PC-3 (cell line): ENCODE measurements at regions of chr1 and their contacts with region 1.

Region 1: DNA sequence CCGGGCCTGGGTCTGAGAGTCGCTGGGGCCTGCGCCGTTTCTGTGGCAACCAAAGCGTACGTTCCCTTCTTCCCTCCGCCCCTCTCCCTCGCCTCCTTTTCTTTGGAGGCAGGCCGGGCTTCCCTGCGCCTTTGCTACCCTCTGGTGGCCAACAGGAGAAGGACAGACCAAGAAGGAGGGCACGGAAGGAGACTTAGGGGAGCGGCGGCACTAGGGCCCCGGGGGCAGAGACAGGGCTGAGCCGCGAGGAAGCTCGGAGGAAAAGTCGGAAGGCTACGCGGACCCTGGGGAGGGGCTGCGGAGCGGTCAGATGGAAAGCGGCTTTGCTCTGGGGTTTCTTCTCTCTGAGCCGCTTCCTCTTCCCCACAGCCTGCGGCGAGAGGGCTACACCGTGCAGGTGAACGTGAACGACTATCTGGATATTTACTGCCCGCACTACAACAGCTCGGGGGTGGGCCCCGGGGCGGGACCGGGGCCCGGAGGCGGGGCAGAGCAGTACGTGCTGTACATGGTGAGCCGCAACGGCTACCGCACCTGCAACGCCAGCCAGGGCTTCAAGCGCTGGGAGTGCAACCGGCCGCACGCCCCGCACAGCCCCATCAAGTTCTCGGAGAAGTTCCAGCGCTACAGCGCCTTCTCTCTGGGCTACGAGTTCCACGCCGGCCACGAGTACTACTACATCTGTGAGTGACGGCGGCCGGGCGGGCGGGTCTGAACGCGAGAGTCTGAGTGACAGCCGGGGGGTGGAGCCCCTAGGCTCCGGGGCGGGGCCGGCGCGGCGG is 6.3 kb downstream of the EFNA3 start:
- DNase-seq: peak; percentile 97
- ATAC-seq: peak; percentile 75
- H3K4me3 ChIP-seq: peak overlapping the region; percentile 73
- H3K27ac ChIP-seq: peak overlapping the region; percentile 83
- H3K4me1 ChIP-seq: peaks cover 60% of the 10 kb centered on the region
- H3K27me3 ChIP-seq: peaks cover 33% of the 10 kb centered on the region
- CTCF ChIP-seq: peak; percentile 92

Region 2: GRCh38 chr1:154669464-154670282 is 415.2 kb before region 1 on chr1:
- CTCF ChIA-PET with region 1: no interaction called
- POLR2A ChIA-PET with region 1: no interaction called
- intact Hi-C with region 1: loop called (anchors 1 kb)
- DNase-seq: peak; percentile 91
- ATAC-seq: peak; percentile 100
- H3K4me3 ChIP-seq: no peak overlapping the region
- H3K27ac ChIP-seq: no peak overlapping the region
- H3K4me1 ChIP-seq: no peaks in the 10 kb centered on the region
- H3K27me3 ChIP-seq: peaks cover 6% of the 10 kb centered on the region; the same call in 1 of the 2 replicates
- CTCF ChIP-seq: peak; percentile 97

Region 3: DNA sequence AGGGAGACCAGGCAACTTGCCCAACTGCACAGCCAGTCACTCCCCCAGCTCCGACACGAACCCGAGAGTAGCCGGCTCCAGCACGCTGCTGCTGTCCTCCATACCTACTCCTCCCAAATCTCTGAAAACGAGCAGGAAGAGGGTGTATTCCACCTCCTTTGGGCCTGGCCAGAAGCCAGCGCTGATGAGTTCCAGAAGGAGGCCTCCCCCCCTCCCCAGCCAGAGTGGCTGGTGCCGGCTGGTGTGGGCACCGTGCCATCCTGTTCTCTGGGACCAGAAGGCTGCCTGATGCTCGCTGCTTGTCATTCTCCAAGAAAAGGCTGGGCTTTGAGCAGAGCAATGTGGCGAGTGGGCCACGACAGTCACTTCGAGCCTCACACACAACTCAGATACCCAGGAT is 237.0 kb before region 1 on chr1:
- CTCF ChIA-PET with region 1: no interaction called
- POLR2A ChIA-PET with region 1: no interaction called
- intact Hi-C with region 1: no loop called
- DNase-seq: no peak
- ATAC-seq: no peak
- H3K4me3 ChIP-seq: no peak overlapping the region
- H3K27ac ChIP-seq: no peak overlapping the region
- H3K4me1 ChIP-seq: no peaks in the 10 kb centered on the region
- H3K27me3 ChIP-seq: peaks cover 17% of the 10 kb centered on the region; the same call in 1 of the 2 replicates
- CTCF ChIP-seq: no peak

Region 4: GRCh38 chr1:155001675-155002463 is 83.0 kb before region 1 on chr1:
- CTCF ChIA-PET with region 1: interaction called, 4 read pairs
- POLR2A ChIA-PET with region 1: no interaction called
- intact Hi-C with region 1: loop called (anchors 2 kb)
- DNase-seq: peak; percentile 99
- ATAC-seq: peak; percentile 54
- H3K4me3 ChIP-seq: peak overlapping the region; percentile 83
- H3K27ac ChIP-seq: peak overlapping the region; percentile 77
- H3K4me1 ChIP-seq: peaks cover 49% of the 10 kb centered on the region
- H3K27me3 ChIP-seq: no peaks in the 10 kb centered on the region
- CTCF ChIP-seq: peak; percentile 81

Region 5: DNA sequence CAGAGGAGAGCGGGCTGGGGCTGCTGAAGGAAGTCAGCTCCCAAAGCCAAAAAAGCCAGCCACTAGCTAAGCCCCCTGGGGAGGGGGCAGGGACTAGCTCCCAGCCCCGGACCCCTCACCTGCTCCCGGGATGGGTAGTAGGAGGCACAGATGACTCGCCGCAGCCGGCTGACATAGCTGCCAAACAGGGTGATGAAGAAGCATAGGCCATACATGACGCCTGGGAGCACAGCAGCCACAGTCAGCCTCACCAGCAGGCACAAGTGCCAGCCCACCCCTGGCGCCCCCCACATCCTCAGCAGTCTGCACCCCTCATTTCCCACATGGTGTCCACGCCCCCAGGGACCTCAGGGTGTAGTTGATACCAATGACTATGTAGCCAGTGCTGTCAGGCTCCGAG is 58.7 kb before region 1 on chr1:
- CTCF ChIA-PET with region 1: no interaction called
- POLR2A ChIA-PET with region 1: no interaction called
- intact Hi-C with region 1: no loop called
- DNase-seq: no peak
- ATAC-seq: no peak; the same call in 1 of the 2 replicates
- H3K4me3 ChIP-seq: no peak overlapping the region
- H3K27ac ChIP-seq: no peak overlapping the region
- H3K4me1 ChIP-seq: peaks cover 7% of the 10 kb centered on the region
- H3K27me3 ChIP-seq: no peaks in the 10 kb centered on the region
- CTCF ChIP-seq: no peak

Region 6: DNA sequence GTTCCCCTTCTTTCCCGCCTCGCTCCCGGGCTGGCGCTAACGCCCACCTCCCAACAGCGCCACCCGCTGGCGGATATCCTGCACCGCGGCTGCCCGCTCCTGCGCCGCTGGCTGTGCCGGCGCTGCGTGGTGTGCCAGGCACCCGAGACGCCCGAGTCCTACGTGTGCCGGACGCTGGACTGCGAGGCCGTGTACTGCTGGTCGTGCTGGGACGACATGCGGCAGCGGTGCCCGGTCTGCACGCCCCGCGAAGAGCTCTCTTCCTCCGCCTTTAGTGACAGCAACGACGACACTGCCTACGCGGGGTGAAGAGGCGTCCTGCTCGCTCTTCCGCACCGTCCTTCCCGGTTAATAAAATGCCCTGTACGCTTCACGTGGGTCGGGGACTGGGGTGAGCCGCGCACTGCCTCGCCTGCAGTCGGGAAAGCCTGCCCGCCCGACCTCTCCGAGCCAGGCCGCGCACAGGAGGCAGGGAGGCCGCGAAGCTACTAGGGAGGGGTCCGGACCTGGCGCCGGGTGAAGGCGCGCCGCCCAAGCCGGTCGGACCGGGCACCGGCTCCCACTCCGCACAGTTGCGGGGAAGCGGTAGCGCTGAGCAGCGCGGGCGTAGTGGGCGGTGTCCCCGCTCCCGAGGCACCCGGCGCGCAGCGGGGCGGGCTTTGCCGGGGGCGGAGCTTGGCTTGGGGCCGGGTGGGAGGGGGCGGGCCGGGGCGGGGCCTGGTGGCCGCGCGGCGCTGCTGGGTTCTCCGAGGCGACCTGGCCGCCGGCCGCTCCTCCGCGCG is 34.2 kb before region 1 on chr1 and contains the start of gene ADAM15:
- CTCF ChIA-PET with region 1: interaction called, 41 read pairs
- POLR2A ChIA-PET with region 1: interaction called, 27 read pairs
- intact Hi-C with region 1: loop called (anchors 1 kb)
- DNase-seq: peak; percentile 93
- ATAC-seq: peak; percentile 56
- H3K4me3 ChIP-seq: peak within 1 kb of the TSS; percentile 95
- H3K27ac ChIP-seq: peak within 1 kb of the TSS; percentile 67
- H3K4me1 ChIP-seq: peaks cover 36% of the 10 kb centered on the region
- H3K27me3 ChIP-seq: no peaks in the 10 kb centered on the region
- CTCF ChIP-seq: peak; percentile 97
- total RNA-seq, gene ADAM15: 334 and 384 TPM in 2 replicates

Region 7: DNA sequence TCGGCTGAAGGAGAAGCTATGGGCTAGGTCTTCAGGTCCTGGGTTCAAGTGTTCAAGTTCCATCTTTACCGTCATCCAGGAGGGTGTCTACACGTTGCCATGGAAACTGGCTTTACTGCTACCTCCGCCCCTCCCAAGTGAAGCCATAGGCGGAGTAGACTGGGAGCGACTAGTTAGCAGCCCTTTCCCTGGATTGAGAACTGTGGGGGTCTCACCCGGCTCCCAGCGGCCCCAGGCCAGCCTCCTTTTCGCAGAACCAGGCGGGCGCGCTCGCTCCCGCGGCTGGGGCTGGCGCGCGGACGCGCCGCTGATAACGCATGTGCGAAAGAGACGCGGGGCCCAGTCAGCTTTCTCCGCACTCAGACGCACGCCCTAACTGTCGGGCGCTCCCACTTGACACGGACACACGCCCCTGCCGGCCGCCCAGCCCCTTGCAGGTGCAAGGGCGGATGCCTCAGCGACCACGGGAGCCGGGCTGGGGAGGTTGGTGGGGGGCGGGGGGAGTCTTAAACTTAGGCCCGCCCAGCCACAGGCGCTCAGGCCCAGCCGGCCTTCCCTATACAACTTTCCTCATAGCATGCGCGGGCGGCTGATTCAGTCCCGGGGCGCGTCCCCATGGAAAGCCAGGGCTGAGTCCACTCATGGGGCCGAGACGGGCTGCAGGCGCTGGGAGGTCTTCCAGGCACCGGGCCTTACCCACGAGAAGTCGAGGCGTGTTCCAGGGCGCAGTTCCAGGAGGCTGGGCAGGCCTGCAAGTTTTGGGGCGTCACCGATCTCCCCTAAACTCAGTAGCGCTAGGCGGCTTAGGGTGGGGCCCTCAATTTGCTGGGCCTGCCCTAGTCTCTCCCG is 14.0 kb before region 1 on chr1:
- CTCF ChIA-PET with region 1: interaction called, 10 read pairs
- POLR2A ChIA-PET with region 1: interaction called, 11 read pairs
- intact Hi-C with region 1: no loop called
- DNase-seq: peak; percentile 93
- ATAC-seq: peak; percentile 94
- H3K4me3 ChIP-seq: peak overlapping the region; percentile 56
- H3K27ac ChIP-seq: no peak overlapping the region
- H3K4me1 ChIP-seq: peaks cover 11% of the 10 kb centered on the region; the same call in 1 of the 2 replicates
- H3K27me3 ChIP-seq: no peaks in the 10 kb centered on the region
- CTCF ChIP-seq: peak; percentile 55

Region 8: GRCh38 chr1:155172732-155173477 is 88.0 kb after region 1 on chr1 and contains the start of gene KRTCAP2:
- CTCF ChIA-PET with region 1: interaction called, 14 read pairs
- POLR2A ChIA-PET with region 1: interaction called, 4 read pairs
- intact Hi-C with region 1: no loop called
- DNase-seq: peak; percentile 99
- ATAC-seq: peak; percentile 70
- H3K4me3 ChIP-seq: peak within 1 kb of the TSS; percentile 83
- H3K27ac ChIP-seq: peak within 1 kb of the TSS; percentile 62
- H3K4me1 ChIP-seq: peaks cover 29% of the 10 kb centered on the region
- H3K27me3 ChIP-seq: no peaks in the 10 kb centered on the region
- CTCF ChIP-seq: peak; percentile 97
- total RNA-seq, gene KRTCAP2: 241 and 257 TPM in 2 replicates